ENCODE measurements at regions of chr3 and their contacts with region 1.

Region 1: GRCh38 chr3:193780810-193781472 is 187.9 kb downstream of the OPA1 start:
- DNase-seq: peak; percentile 84
- H3K4me3 ChIP-seq: peak overlapping the region in 1 of 2 experiments; percentile 3; a peak in 1 of 4 replicates
- H3K27ac ChIP-seq: peak overlapping the region in 1 of 2 experiments; percentile 38; a peak in 1 of 4 replicates
- H3K4me1 ChIP-seq: peaks cover 13 to 34% of the 10 kb centered on the region in 2 experiments; a peak in 3 of 4 replicates
- H3K27me3 ChIP-seq: peaks cover 15% of the 10 kb centered on the region; the same call in 1 of the 2 replicates
- CTCF ChIP-seq: peak; percentile 83
- EP300 ChIP-seq: 0 out of 4 replicates have a peak, but pooled peaks of 1 of the 2 experiments have one; percentile 48
- RAD21 ChIP-seq: peak; percentile 89

Region 2: GRCh38 chr3:193585530-193585929 is 195.4 kb before region 1 on chr3:
- CTCF ChIA-PET with region 1: no interaction called
- POLR2A ChIA-PET with region 1: no interaction called
- DNase-seq: no peak
- H3K4me3 ChIP-seq: no peak overlapping the region
- H3K27ac ChIP-seq: no peak overlapping the region
- H3K4me1 ChIP-seq: no peaks in the 10 kb centered on the region
- H3K27me3 ChIP-seq: no peaks in the 10 kb centered on the region
- CTCF ChIP-seq: no peak
- EP300 ChIP-seq: no peak
- RAD21 ChIP-seq: no peak

Region 3: GRCh38 chr3:193665370-193665989 is 115.5 kb before region 1 on chr3:
- CTCF ChIA-PET with region 1: interaction called, 25 read pairs
- POLR2A ChIA-PET with region 1: no interaction called
- DNase-seq: peak; percentile 24
- H3K4me3 ChIP-seq: no peak overlapping the region
- H3K27ac ChIP-seq: no peak overlapping the region
- H3K4me1 ChIP-seq: no peaks in the 10 kb centered on the region; a peak in 1 of 4 replicates
- H3K27me3 ChIP-seq: no peaks in the 10 kb centered on the region
- CTCF ChIP-seq: peak; percentile 75
- EP300 ChIP-seq: no peak
- RAD21 ChIP-seq: peak; percentile 64

Region 4: GRCh38 chr3:193744048-193744821 is 36.7 kb before region 1 on chr3:
- CTCF ChIA-PET with region 1: interaction called, 13 read pairs
- POLR2A ChIA-PET with region 1: no interaction called
- DNase-seq: no peak
- H3K4me3 ChIP-seq: no peak overlapping the region
- H3K27ac ChIP-seq: peak overlapping the region in 1 of 2 experiments; percentile 89; a peak in 2 of 4 replicates
- H3K4me1 ChIP-seq: peaks cover 0 to 23% of the 10 kb centered on the region in 2 experiments; a peak in 3 of 4 replicates
- H3K27me3 ChIP-seq: no peaks in the 10 kb centered on the region
- CTCF ChIP-seq: no peak
- EP300 ChIP-seq: no peak
- RAD21 ChIP-seq: no peak

Region 5: DNA sequence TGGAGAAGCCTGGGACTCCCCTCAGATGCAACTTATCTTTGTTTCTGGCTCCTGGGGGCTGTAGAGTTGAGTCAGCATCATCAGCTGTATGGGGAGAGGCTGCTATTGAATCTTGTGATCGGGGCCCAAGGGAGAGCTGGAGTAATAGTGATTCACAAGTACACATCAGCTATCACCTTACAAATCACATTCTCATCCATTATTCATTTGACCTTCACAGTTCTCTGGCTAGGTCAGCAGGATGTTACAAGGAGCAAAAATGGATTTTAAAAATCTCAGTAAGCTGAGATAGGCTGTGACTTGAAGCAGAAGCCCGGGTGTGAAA is 12.9 kb before region 1 on chr3:
- CTCF ChIA-PET with region 1: interaction called, 29 read pairs
- POLR2A ChIA-PET with region 1: no interaction called
- DNase-seq: no peak
- H3K4me3 ChIP-seq: no peak overlapping the region
- H3K27ac ChIP-seq: no peak overlapping the region
- H3K4me1 ChIP-seq: no peaks in the 10 kb centered on the region; a peak in 1 of 4 replicates
- H3K27me3 ChIP-seq: peaks cover 1% of the 10 kb centered on the region; the same call in 1 of the 2 replicates
- CTCF ChIP-seq: no peak
- EP300 ChIP-seq: no peak
- RAD21 ChIP-seq: no peak

Region 6: DNA sequence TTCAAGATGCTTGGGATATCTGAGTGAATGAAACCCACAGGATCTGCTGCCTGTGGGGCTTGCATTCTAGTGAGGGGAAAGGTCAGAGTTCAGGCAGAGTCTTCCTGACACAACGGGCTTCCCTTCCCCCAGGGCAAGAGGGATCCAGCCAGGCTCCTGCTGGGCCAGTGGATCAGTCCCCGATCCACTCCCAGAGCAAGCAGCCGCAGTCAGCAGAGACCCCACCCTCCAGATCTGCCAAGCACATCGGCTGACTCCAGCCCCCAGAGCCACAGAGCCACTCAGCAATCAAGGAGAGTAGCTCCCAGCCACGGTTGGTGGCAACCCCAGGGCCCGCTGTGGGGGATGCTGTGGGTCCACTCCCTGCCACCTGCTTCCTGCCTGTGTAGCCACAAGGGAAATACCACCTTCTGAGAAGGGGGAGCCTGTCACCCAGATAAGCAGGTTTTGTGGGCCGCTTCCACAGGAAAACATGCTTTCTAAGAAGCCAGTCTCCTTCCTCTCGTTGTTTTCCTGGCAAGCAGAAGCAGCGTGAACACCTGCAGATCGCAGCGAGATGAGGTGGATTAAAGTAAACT is 525.3 kb after region 1 on chr3:
- CTCF ChIA-PET with region 1: interaction called, 18 read pairs
- POLR2A ChIA-PET with region 1: no interaction called
- DNase-seq: no peak
- H3K4me3 ChIP-seq: no peak overlapping the region
- H3K27ac ChIP-seq: no peak overlapping the region
- H3K4me1 ChIP-seq: peaks cover 8 to 25% of the 10 kb centered on the region in 2 experiments; a peak in 3 of 4 replicates
- H3K27me3 ChIP-seq: peaks cover 22% of the 10 kb centered on the region
- CTCF ChIP-seq: no peak
- EP300 ChIP-seq: no peak
- RAD21 ChIP-seq: no peak

Measured in SK-N-SH (cell line).